ENCODE measurements at regions of chr16 and their contacts with region 1.

Region 1: GRCh38 chr16:81723098-81723723 is 55.9 kb upstream of the PLCG2 start:
- DNase-seq: no peak
- ATAC-seq: peak; percentile 91 to 94
- H3K4me3 ChIP-seq: no peak overlapping the region
- H3K27ac ChIP-seq: no peak overlapping the region
- H3K4me1 ChIP-seq: peaks cover 4% of the 10 kb centered on the region
- H3K27me3 ChIP-seq: no peaks in the 10 kb centered on the region

Region 2: GRCh38 chr16:81366316-81366932 is 356.8 kb before region 1 on chr16:
- intact Hi-C with region 1: loop called in 2 of 4 experiments (anchors 5 to 10 kb)
- DNase-seq: no peak
- ATAC-seq: peak; percentile 54 to 56
- H3K4me3 ChIP-seq: no peak overlapping the region
- H3K27ac ChIP-seq: no peak overlapping the region
- H3K4me1 ChIP-seq: no peaks in the 10 kb centered on the region
- H3K27me3 ChIP-seq: no peaks in the 10 kb centered on the region

Region 3: DNA sequence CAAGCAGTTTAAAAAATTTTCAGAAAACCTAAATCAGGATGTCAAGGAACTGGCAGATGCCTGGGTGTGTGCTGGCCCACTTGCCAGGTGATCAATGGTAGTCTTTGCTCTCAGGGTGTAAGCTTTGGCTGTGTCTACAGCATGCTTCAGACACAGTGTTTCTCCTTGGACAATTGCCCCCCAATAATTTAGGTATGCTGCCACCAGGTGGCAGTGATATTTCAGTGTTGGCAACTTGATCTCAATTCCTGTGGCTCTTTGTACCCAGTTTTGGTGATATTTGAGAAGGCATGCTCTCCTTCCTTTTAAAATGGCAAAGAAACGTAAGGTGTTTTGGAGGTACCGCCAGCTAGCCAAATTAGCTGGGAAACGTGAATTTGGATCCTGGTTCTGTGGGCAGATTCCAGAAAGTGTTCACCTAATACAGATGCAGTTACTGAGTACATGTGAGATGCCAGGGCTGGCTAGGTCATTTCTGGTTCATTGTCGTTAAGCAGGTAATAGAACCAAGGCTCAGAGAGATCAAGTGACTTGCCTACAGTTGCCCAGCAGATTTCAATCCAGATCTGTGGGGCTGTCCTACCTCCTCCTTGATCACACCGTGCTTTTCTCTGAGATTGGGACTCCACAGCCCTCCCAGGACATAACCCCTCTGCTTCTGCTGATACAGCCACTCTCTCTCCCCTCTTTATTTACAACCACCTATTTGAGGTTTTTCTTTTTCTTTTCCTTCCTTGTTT is 99.7 kb before region 1 on chr16:
- intact Hi-C with region 1: loop called in 1 of 4 experiments (anchors 5 kb)
- DNase-seq: no peak
- ATAC-seq: no peak
- H3K4me3 ChIP-seq: no peak overlapping the region
- H3K27ac ChIP-seq: no peak overlapping the region
- H3K4me1 ChIP-seq: peaks cover 11% of the 10 kb centered on the region
- H3K27me3 ChIP-seq: no peaks in the 10 kb centered on the region